ENCODE measurements at regions of chr6 and their contacts with region 1.

Region 1: DNA sequence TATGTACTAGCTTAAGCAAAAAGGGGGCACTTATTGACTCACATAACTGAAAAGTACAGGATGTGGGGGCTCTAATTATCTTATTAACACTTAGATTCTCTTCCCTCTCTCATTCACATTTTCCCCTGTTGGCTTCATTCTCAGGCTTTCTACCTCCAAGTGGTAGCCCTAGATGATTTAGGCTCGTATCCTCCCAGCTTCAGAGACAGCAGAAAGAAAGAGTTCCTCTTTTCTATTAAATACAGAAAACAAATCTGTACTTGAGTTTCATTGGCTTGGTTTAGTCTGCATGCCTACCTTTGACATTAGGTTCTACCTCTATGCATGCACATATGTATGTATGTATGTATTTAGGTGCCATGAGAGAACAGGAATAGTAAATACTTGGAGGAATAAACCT is 15.5 kb upstream of the E2F3 start:
- DNase-seq: no peak
- H3K4me3 ChIP-seq: no peak overlapping the region
- H3K27ac ChIP-seq: no peak overlapping the region
- H3K4me1 ChIP-seq: no peaks in the 10 kb centered on the region
- H3K27me3 ChIP-seq: no peaks in the 10 kb centered on the region
- CTCF ChIP-seq: no peak

Region 2: GRCh38 chr6:20234136-20234535 is 152.1 kb before region 1 on chr6:
- intact Hi-C with region 1: no loop called
- DNase-seq: no peak
- H3K4me3 ChIP-seq: no peak overlapping the region
- H3K27ac ChIP-seq: no peak overlapping the region
- H3K4me1 ChIP-seq: no peaks in the 10 kb centered on the region
- H3K27me3 ChIP-seq: peaks cover 0 to 5% of the 10 kb centered on the region in 2 donors
- CTCF ChIP-seq: no peak

Region 3: GRCh38 chr6:20279608-20280287 is 106.5 kb before region 1 on chr6:
- intact Hi-C with region 1: no loop called
- DNase-seq: no peak
- H3K4me3 ChIP-seq: no peak overlapping the region
- H3K27ac ChIP-seq: no peak overlapping the region
- H3K4me1 ChIP-seq: no peaks in the 10 kb centered on the region
- H3K27me3 ChIP-seq: peaks cover 0 to 9% of the 10 kb centered on the region in 2 donors
- CTCF ChIP-seq: no peak

Region 4: DNA sequence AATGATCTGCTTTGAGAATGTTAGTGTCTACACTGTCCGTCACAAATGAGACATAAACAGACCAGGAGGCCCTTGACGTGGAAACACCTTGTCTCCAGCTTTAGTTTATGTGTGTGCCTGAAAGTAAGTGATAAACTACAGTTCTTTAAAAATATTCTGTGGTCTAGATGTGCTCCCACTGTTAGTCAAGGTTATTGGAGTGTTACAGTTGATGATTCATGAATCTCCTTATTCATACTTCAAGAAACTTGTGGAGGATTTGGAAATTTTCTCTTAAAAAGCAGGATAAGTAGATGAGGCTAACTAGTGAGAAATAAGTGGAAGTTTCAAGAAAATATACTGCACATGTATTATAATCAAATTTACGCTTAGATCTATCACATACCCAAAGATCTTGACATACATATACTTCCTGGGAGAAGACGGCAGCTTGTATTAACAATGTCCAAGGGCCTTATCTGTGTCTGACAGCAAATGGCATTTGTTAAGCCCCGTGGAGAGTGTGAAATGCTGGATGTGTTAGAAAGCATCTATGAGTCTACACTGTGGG is 83.4 kb before region 1 on chr6:
- intact Hi-C with region 1: loop called (anchors 10 kb)
- DNase-seq: no peak
- H3K4me3 ChIP-seq: no peak overlapping the region
- H3K27ac ChIP-seq: no peak overlapping the region
- H3K4me1 ChIP-seq: no peaks in the 10 kb centered on the region
- H3K27me3 ChIP-seq: no peaks in the 10 kb centered on the region
- CTCF ChIP-seq: no peak

Region 5: GRCh38 chr6:20640181-20640580 is 254.0 kb after region 1 on chr6:
- intact Hi-C with region 1: no loop called
- DNase-seq: no peak
- H3K4me3 ChIP-seq: no peak overlapping the region
- H3K27ac ChIP-seq: no peak overlapping the region
- H3K4me1 ChIP-seq: no peaks in the 10 kb centered on the region
- H3K27me3 ChIP-seq: no peaks in the 10 kb centered on the region
- CTCF ChIP-seq: no peak

Region 6: DNA sequence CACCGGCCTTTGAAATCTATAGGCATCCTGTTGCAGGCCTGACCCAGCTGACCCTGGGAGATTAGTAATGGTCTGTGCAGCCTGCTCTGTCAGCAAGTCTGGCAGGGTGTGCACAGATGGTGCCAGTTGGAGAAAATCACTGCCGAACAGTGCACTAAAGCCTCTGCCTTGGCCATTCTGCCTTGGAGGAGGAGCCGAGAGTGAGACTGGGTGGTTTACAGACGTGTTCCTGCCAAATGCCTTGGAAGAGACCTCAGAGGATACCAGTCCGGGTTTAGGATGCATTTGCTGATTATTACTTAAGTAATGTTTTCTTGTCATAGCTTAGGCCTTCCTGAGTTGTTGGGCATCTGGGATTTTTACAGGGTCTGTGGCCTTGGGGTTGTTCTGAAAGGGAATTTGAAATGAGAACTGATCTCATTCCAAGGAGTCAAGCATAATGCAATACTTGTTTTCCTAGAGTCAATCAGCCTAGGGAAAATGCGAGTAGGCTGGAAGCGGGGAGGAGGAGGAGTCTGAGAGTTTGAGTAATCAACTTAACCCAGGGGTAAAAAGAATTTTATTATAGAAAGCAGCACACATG is 1499.4 kb after region 1 on chr6:
- intact Hi-C with region 1: no loop called
- DNase-seq: peak; percentile 47 to 82
- H3K4me3 ChIP-seq: no peak overlapping the region
- H3K27ac ChIP-seq: peak overlapping the region; percentile 69
- H3K4me1 ChIP-seq: peaks cover 0 to 44% (median 27%) of the 10 kb centered on the region in 4 donors
- H3K27me3 ChIP-seq: no peaks in the 10 kb centered on the region
- CTCF ChIP-seq: no peak

Measured in tibial artery (tissue), 4 donors.